Activated B cell treated with CpG ODN at 0.5 μM for 24 hours (primary cell): ENCODE measurements at regions of chr7 and their contacts with region 1.

Region 1: DNA sequence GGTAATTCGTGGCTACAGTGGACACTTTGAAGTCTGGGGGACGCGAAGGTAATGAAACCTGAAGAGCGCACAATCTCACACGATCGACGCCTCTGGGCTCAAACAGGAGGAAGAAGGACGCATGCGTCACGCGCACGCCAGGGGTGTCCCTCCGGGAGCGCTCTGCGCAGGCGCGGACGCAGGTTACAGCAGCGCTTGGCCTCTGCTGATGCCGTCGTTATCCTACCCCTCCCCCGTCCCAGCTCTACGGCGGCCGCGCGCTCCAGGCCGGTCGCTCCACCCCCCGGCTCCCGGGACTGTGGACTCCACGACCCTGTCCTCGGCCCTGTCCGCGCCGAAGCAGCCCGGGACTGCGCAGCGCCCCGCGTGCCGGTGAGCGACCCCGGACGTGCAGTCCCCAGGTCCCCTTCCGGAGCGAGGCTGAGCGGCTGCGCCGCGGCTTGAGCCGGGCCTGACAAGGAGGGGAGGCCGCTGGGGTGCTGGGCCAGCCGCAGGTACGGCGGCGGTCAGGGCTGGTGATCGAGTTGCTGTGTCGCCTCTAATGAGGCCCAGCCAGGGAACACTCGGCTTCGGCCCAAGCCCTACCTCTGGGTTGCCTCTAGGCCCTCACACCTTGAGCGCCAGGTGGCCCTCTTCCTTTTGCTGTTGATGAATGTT is at the start of gene TMEM106B:
- DNase-seq: peak; percentile 92
- ATAC-seq: peak; percentile 92
- H3K4me3 Mint-ChIP-seq: peak within 1 kb of the TSS; percentile 91
- H3K27ac Mint-ChIP-seq: peak within 1 kb of the TSS; percentile 90
- H3K4me1 Mint-ChIP-seq: peaks cover 21% of the 10 kb centered on the region
- H3K27me3 Mint-ChIP-seq: peaks cover 8% of the 10 kb centered on the region
- CTCF ChIP-seq: no peak
- total RNA-seq, gene TMEM106B: 18.1 and 22.1 TPM in 2 replicates

Region 2: DNA sequence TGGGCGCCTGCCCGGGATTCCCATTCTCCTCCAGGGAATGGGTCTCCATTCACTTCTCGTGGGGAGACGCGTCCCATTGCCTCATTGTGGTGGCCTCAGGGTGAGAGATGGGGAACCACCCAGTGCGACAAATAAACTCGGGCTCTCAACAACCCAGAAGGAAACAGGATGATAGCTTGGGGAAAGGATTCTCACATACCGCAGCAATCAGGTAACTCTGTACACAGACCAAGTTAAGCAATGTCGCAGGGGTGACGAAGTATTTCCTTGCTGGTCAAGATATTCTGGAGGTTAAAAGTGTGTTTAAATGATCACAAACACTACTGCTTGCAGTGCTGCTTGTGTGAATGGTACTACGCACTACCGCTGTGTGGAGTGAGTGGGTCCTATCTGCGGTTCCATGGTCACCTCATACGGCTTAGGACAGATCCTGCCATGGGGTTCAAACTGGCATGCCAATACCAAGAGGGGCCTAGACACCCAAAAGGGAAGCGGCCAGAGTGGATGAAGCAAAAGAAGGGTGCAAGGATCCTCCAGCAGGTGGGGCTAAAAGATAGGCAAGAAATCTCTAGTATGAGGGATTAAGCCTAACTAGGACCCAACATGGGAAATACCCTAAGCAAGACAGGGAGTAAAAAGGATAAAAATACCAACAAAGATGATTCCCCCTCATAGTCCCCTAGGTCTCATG is 143.9 kb before region 1 on chr7:
- CTCF ChIA-PET with region 1: no interaction called
- POLR2A ChIA-PET with region 1: no interaction called
- intact Hi-C with region 1: loop called (anchors 5 kb)
- DNase-seq: no peak
- ATAC-seq: peak; percentile 50
- H3K4me3 Mint-ChIP-seq: no peak overlapping the region
- H3K27ac Mint-ChIP-seq: no peak overlapping the region
- H3K4me1 Mint-ChIP-seq: peaks cover 8% of the 10 kb centered on the region
- H3K27me3 Mint-ChIP-seq: no peaks in the 10 kb centered on the region
- CTCF ChIP-seq: no peak

Region 3: GRCh38 chr7:12222889-12223579 is 11.9 kb after region 1 on chr7:
- CTCF ChIA-PET with region 1: no interaction called
- POLR2A ChIA-PET with region 1: interaction called, 3 read pairs
- intact Hi-C with region 1: loop called (anchors 1 kb)
- DNase-seq: no peak
- ATAC-seq: peak; percentile 65
- H3K4me3 Mint-ChIP-seq: peak overlapping the region; percentile 3
- H3K27ac Mint-ChIP-seq: peak overlapping the region; percentile 19
- H3K4me1 Mint-ChIP-seq: peaks cover 22% of the 10 kb centered on the region
- H3K27me3 Mint-ChIP-seq: no peaks in the 10 kb centered on the region
- CTCF ChIP-seq: no peak

Region 4: DNA sequence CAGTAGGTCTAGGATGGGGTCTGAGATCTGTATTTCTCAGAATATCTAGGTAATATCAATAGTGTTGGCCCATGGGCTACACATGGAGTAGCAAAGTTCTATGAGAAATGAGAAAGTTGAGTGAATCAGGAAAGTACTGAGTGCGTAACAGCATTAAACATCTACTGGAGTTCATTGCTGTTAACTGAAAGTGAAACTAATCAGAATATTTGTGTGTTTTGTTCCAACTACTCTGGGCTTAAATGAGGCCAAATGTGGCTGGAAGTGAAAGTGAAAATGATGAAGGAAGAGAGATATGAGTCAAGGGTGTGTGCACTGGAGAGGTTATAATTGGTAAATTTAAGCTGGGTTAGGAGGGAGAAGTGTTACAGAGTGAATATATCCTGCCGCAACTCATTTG is 46.4 kb after region 1 on chr7:
- CTCF ChIA-PET with region 1: no interaction called
- POLR2A ChIA-PET with region 1: interaction called, 12 read pairs
- intact Hi-C with region 1: loop called (anchors 1 kb)
- DNase-seq: no peak
- ATAC-seq: peak; percentile 96
- H3K4me3 Mint-ChIP-seq: no peak overlapping the region
- H3K27ac Mint-ChIP-seq: no peak overlapping the region
- H3K4me1 Mint-ChIP-seq: no peaks in the 10 kb centered on the region
- H3K27me3 Mint-ChIP-seq: no peaks in the 10 kb centered on the region
- CTCF ChIP-seq: no peak

Region 5: DNA sequence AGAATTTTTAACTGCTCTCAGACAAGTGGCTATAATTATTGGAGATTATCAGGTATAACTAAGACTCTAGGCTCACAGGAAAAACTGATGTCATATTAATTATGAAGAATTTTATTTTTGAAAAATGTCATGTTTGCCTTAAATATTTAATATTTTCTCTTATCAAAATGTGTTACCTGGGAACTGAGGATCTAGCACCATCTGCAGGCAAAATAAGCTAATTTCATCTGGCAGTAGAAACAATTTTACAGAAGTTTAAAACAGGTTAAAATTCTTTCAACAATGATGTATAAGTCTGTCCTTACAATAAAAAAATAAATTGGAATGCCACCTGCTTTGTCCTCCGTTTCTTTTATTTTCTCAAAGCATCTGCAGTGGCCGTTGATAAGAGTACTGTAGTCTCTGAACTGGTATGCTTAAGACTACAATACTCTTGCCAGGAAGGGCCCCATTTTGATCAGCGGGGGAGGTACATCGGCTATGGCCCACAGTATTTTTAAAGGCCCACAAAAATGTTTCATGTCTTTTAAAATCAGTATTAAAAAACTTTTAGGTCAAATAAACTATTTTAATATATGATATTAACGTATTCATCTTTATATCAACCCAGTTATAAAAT is 111.2 kb after region 1 on chr7:
- CTCF ChIA-PET with region 1: interaction called, 3 read pairs
- POLR2A ChIA-PET with region 1: no interaction called
- intact Hi-C with region 1: loop called (anchors 2 kb)
- DNase-seq: no peak
- ATAC-seq: no peak
- H3K4me3 Mint-ChIP-seq: no peak overlapping the region
- H3K27ac Mint-ChIP-seq: no peak overlapping the region
- H3K4me1 Mint-ChIP-seq: no peaks in the 10 kb centered on the region
- H3K27me3 Mint-ChIP-seq: no peaks in the 10 kb centered on the region
- CTCF ChIP-seq: peak; percentile 93

Region 6: GRCh38 chr7:13057462-13058200 is 846.4 kb after region 1 on chr7:
- CTCF ChIA-PET with region 1: no interaction called
- POLR2A ChIA-PET with region 1: no interaction called
- intact Hi-C with region 1: loop called (anchors 5 kb)
- DNase-seq: no peak
- ATAC-seq: peak; percentile 84
- H3K4me3 Mint-ChIP-seq: peak overlapping the region; percentile 82
- H3K27ac Mint-ChIP-seq: peak overlapping the region; percentile 94
- H3K4me1 Mint-ChIP-seq: peaks cover 44% of the 10 kb centered on the region
- H3K27me3 Mint-ChIP-seq: no peaks in the 10 kb centered on the region
- CTCF ChIP-seq: no peak